AG04450 (cell line): ENCODE measurements at regions of chr3 and their contacts with region 1.

Region 1: GRCh38 chr3:190701096-190701532 is 161.4 kb downstream of the GMNC start:
- DNase-seq: no peak
- H3K4me3 ChIP-seq: no peak overlapping the region
- H3K27ac ChIP-seq: no peak overlapping the region
- H3K27me3 ChIP-seq: no peaks in the 10 kb centered on the region
- CTCF ChIP-seq: peak; percentile 70

Region 2: GRCh38 chr3:190224863-190225692 is 476.0 kb before region 1 on chr3:
- CTCF ChIA-PET with region 1: interaction called, 20 read pairs
- POLR2A ChIA-PET with region 1: no interaction called
- DNase-seq: no peak
- H3K4me3 ChIP-seq: no peak overlapping the region
- H3K27ac ChIP-seq: no peak overlapping the region
- H3K27me3 ChIP-seq: no peaks in the 10 kb centered on the region
- CTCF ChIP-seq: peak; percentile 55

Region 3: DNA sequence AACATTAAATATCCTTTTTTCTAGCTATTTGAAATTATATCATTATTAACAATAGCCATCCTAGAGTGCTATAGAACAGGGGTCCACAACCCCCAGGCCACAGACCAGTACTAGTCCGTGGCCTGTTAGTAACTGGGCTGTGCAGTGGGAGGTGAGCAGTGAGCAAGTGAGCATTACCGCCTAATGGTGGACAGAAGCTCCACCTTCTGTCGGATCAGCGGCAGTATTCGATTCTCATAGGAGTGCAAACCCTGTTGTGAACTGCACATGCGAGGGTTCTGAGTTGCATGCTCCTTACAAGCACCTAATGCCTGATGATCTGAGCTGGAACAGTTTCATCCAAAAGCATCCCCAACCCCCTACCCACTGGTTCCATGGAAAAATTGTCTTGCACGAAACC is 301.4 kb before region 1 on chr3:
- CTCF ChIA-PET with region 1: no interaction called
- POLR2A ChIA-PET with region 1: no interaction called
- DNase-seq: no peak
- H3K4me3 ChIP-seq: no peak overlapping the region
- H3K27ac ChIP-seq: no peak overlapping the region
- H3K27me3 ChIP-seq: no peaks in the 10 kb centered on the region
- CTCF ChIP-seq: no peak

Region 4: GRCh38 chr3:190443257-190443656 is 257.9 kb before region 1 on chr3:
- CTCF ChIA-PET with region 1: interaction called, 28 read pairs
- POLR2A ChIA-PET with region 1: no interaction called
- DNase-seq: no peak
- H3K4me3 ChIP-seq: no peak overlapping the region
- H3K27ac ChIP-seq: no peak overlapping the region
- H3K27me3 ChIP-seq: no peaks in the 10 kb centered on the region
- CTCF ChIP-seq: peak; percentile 54

Region 5: GRCh38 chr3:190673148-190673547 is 28.0 kb before region 1 on chr3:
- CTCF ChIA-PET with region 1: interaction called, 11 read pairs
- POLR2A ChIA-PET with region 1: no interaction called
- DNase-seq: no peak
- H3K4me3 ChIP-seq: no peak overlapping the region
- H3K27ac ChIP-seq: no peak overlapping the region
- H3K27me3 ChIP-seq: no peaks in the 10 kb centered on the region
- CTCF ChIP-seq: no peak

Region 6: DNA sequence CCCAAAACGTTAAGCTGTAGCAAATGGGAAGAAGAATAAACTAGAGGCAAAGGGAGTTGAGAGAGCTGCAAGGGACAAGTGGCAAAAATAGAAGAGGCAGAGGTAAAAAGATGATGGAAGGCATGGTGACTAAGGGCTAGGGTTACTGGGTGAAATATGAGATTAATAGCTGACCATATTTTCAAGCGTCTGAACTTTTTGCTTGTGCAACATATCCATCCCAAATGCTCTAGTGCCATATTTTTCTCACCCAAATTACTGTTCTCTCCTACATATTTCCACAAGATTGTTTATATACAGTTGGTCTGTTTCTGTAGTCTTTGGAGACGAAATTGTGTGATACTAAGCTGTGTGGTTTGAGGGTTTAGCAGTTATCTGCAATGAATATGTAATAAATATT is 15.8 kb after region 1 on chr3:
- CTCF ChIA-PET with region 1: interaction called, 13 read pairs
- POLR2A ChIA-PET with region 1: no interaction called
- DNase-seq: no peak
- H3K4me3 ChIP-seq: no peak overlapping the region
- H3K27ac ChIP-seq: no peak overlapping the region
- H3K27me3 ChIP-seq: no peaks in the 10 kb centered on the region
- CTCF ChIP-seq: no peak

Region 7: GRCh38 chr3:190811775-190812480 is 110.8 kb after region 1 on chr3:
- CTCF ChIA-PET with region 1: interaction called, 12 read pairs
- POLR2A ChIA-PET with region 1: no interaction called
- DNase-seq: peak; percentile 36
- H3K4me3 ChIP-seq: peak overlapping the region; percentile 52
- H3K27ac ChIP-seq: no peak overlapping the region
- H3K27me3 ChIP-seq: no peaks in the 10 kb centered on the region
- CTCF ChIP-seq: peak; percentile 82

Region 8: DNA sequence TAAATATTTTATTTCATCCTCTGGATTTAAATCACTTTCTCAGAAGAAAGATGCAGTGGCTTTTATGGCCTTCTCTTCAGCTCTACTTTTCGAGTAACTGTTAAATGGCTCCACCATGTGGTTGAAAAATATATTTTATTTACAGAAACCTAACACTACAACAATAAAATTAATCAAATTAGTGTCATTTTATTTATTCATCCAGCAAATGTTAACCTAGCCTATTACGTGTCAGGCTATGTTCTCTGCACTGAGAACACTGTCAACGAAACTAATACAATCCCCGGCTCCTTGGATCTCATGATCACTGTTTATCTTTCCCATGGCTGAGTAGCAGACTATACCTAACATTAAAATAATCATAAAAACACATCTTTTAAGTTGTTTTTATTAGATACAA is 349.9 kb after region 1 on chr3:
- CTCF ChIA-PET with region 1: interaction called, 57 read pairs
- POLR2A ChIA-PET with region 1: no interaction called
- DNase-seq: no peak
- H3K4me3 ChIP-seq: no peak overlapping the region
- H3K27ac ChIP-seq: no peak overlapping the region
- H3K27me3 ChIP-seq: no peaks in the 10 kb centered on the region
- CTCF ChIP-seq: peak; percentile 57